ENCODE measurements at regions of chr3 and their contacts with region 1.

Region 1: GRCh38 chr3:87260270-87260669 is 16.1 kb downstream of the POU1F1 start:
- DNase-seq: peak in 6 of 9 donors; percentile 1 to 46 (median 24)
- ATAC-seq: no peak
- H3K4me3 ChIP-seq: no peak overlapping the region
- H3K4me3 Mint-ChIP-seq: no peak overlapping the region
- H3K27ac ChIP-seq: no peak overlapping the region
- H3K27ac Mint-ChIP-seq: no peak overlapping the region
- H3K4me1 ChIP-seq: no peaks in the 10 kb centered on the region
- H3K4me1 Mint-ChIP-seq: peaks cover 0 to 12% (median 6%) of the 10 kb centered on the region in 7 donors
- H3K27me3 ChIP-seq: no peaks in the 10 kb centered on the region
- H3K27me3 Mint-ChIP-seq: peaks cover 0 to 13% (median 0%) of the 10 kb centered on the region in 5 donors

Region 2: DNA sequence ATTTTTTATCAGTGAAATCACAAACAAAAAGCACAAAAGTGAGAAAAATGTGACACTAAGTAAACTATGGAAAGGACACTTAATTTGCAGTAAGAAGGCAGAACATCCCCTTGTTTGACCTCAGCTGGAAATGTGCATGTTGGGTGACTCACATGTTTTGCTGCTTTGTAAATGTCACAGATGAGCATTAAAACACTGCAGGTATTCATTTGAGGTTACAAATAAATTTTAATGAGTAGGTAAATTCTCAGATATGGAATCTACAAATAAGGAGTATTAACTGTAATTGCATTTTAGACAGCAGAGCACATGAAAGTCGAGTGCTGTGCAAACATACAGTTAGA is 12.9 kb before region 1 on chr3:
- CTCF ChIA-PET with region 1: interaction called, 3 read pairs
- POLR2A ChIA-PET with region 1: no interaction called
- intact Hi-C with region 1: loop called in 1 of 2 experiments (anchors 2 kb)
- DNase-seq: no peak
- ATAC-seq: no peak
- H3K4me3 ChIP-seq: no peak overlapping the region
- H3K4me3 Mint-ChIP-seq: no peak overlapping the region
- H3K27ac ChIP-seq: no peak overlapping the region
- H3K27ac Mint-ChIP-seq: no peak overlapping the region
- H3K4me1 ChIP-seq: no peaks in the 10 kb centered on the region
- H3K4me1 Mint-ChIP-seq: peaks cover 0 to 24% (median 14%) of the 10 kb centered on the region in 7 donors
- H3K27me3 ChIP-seq: no peaks in the 10 kb centered on the region
- H3K27me3 Mint-ChIP-seq: no peaks in the 10 kb centered on the region

Region 3: GRCh38 chr3:87287011-87287410 is 26.7 kb after region 1 on chr3:
- CTCF ChIA-PET with region 1: interaction called, 4 read pairs
- POLR2A ChIA-PET with region 1: no interaction called
- intact Hi-C with region 1: loop called in 1 of 2 experiments (anchors 2 kb)
- DNase-seq: no peak
- ATAC-seq: no peak
- H3K4me3 ChIP-seq: no peak overlapping the region
- H3K4me3 Mint-ChIP-seq: no peak overlapping the region
- H3K27ac ChIP-seq: no peak overlapping the region
- H3K27ac Mint-ChIP-seq: no peak overlapping the region
- H3K4me1 ChIP-seq: no peaks in the 10 kb centered on the region
- H3K4me1 Mint-ChIP-seq: no peaks in the 10 kb centered on the region
- H3K27me3 ChIP-seq: no peaks in the 10 kb centered on the region
- H3K27me3 Mint-ChIP-seq: peaks cover 4 to 22% (median 16%) of the 10 kb centered on the region in 5 donors

Region 4: GRCh38 chr3:87380761-87381160 is 120.5 kb after region 1 on chr3:
- CTCF ChIA-PET with region 1: no interaction called
- POLR2A ChIA-PET with region 1: no interaction called
- intact Hi-C with region 1: no loop called
- DNase-seq: no peak
- ATAC-seq: no peak
- H3K4me3 ChIP-seq: no peak overlapping the region
- H3K4me3 Mint-ChIP-seq: no peak overlapping the region
- H3K27ac ChIP-seq: no peak overlapping the region
- H3K27ac Mint-ChIP-seq: no peak overlapping the region
- H3K4me1 ChIP-seq: no peaks in the 10 kb centered on the region
- H3K4me1 Mint-ChIP-seq: no peaks in the 10 kb centered on the region
- H3K27me3 ChIP-seq: no peaks in the 10 kb centered on the region
- H3K27me3 Mint-ChIP-seq: peaks cover 0 to 3% (median 0%) of the 10 kb centered on the region in 5 donors

Region 5: GRCh38 chr3:88149509-88150362 is 889.5 kb after region 1 on chr3 and contains the start of gene C3orf38:
- CTCF ChIA-PET with region 1: no interaction called
- POLR2A ChIA-PET with region 1: interaction called, 3 read pairs
- intact Hi-C with region 1: loop called in 1 of 2 experiments (anchors 10 kb)
- DNase-seq: peak; percentile 74 to 88 (median 85)
- ATAC-seq: peak; percentile 96
- H3K4me3 ChIP-seq: peak within 1 kb of the TSS; percentile 88
- H3K4me3 Mint-ChIP-seq: peak within 1 kb of the TSS; percentile 93 to 99 (median 98)
- H3K27ac ChIP-seq: peak within 1 kb of the TSS; percentile 94
- H3K27ac Mint-ChIP-seq: peak within 1 kb of the TSS; percentile 97 to 99 (median 99)
- H3K4me1 ChIP-seq: peaks cover 13 to 17% of the 10 kb centered on the region in 2 donors
- H3K4me1 Mint-ChIP-seq: peaks cover 16 to 46% (median 43%) of the 10 kb centered on the region in 7 donors
- H3K27me3 ChIP-seq: no peaks in the 10 kb centered on the region
- H3K27me3 Mint-ChIP-seq: no peaks in the 10 kb centered on the region
- total RNA-seq, gene C3orf38: 28.9 to 40.2 (median 34.7) TPM

Measured in naive thymus-derived CD4-positive, alpha-beta T cell (primary cell).